GM23248 (cell line): ENCODE measurements at regions of chr10 and their contacts with region 1.

Region 1: DNA sequence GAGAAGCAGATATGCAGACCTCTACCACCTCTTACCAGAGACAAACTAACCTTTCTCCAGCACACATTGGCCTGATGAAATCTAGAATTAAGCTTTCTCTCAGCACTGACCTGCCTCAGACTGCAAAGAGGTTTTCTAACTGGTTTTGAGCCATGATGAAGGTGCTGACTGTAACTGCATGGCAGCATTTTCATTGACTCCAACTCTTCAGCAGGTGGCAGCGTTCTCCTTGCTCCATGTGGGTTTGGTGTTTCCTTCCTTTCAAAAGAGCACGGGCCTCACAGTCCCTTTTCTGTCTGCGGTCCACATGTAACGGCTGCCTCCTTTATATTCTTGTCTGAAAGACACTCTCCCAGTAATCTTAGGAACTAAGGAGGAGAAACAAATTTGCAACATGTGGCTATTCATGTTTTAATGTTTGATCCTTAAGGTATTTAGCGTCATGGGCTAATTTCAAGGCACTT is 12.6 kb downstream of the KLLN start:
- DNase-seq: peak; percentile 79
- H3K4me3 ChIP-seq: no peak overlapping the region
- H3K27ac ChIP-seq: no peak overlapping the region
- H3K4me1 ChIP-seq: peaks cover 6% of the 10 kb centered on the region
- H3K27me3 ChIP-seq: no peaks in the 10 kb centered on the region

Region 2: DNA sequence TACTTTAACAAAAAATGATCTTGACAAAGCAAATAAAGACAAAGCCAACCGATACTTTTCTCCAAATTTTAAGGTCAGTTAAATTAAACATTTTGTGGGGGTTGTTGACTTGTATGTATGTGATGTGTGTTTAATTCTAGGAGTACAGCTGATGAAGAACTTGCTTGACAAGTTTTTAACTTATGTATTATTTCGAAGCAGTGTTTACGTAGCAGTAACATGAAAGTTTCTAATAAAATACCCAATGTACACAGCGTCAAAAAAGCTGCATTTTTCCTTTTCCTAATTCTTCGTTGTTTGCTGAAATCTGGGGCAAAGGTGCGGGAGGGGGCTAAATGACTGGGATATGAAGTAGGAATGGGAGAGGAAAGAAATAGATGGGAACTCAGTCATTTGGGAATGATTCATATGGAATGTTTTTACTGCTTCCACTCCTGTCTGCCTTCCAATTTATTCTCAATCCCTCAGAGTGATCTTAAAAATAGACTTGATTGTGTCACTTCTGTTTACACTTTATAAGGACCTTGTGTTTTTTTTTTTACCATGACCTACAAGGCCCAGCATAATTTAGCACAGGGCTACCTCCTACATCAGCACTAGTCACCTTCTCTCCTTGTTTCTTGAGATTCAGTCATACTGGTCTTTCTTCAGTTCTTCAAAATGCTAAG is 110.4 kb after region 1 on chr10:
- in situ Hi-C with region 1: no loop called
- DNase-seq: peak; percentile 81
- H3K4me3 ChIP-seq: 0 out of 2 replicates have a peak overlapping the region, but pooled peaks have one; percentile 11
- H3K27ac ChIP-seq: peak overlapping the region; percentile 66
- H3K4me1 ChIP-seq: peaks cover 27% of the 10 kb centered on the region
- H3K27me3 ChIP-seq: no peaks in the 10 kb centered on the region

Region 3: DNA sequence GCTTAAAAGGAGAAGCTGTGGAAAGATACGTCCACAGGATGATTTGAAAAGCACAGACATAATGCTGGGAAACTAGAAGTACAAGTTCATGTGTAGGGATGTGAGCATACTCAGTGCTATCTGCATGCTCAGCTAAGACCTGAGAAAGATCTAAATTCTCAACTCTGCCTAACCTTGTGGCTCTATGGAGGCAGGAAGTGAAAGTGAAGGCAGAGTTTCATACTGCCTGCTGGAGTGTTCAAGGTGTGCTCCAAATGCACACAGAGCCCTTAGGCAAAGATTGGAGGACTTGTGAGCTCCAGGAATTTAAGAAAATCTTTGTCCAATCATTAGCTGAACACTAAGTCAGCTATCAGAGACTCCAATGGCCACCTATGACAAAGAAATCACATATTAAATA is 541.4 kb after region 1 on chr10:
- in situ Hi-C with region 1: loop called (anchors 10 kb)
- DNase-seq: no peak
- H3K4me3 ChIP-seq: no peak overlapping the region
- H3K27ac ChIP-seq: no peak overlapping the region
- H3K4me1 ChIP-seq: no peaks in the 10 kb centered on the region
- H3K27me3 ChIP-seq: no peaks in the 10 kb centered on the region

Region 4: DNA sequence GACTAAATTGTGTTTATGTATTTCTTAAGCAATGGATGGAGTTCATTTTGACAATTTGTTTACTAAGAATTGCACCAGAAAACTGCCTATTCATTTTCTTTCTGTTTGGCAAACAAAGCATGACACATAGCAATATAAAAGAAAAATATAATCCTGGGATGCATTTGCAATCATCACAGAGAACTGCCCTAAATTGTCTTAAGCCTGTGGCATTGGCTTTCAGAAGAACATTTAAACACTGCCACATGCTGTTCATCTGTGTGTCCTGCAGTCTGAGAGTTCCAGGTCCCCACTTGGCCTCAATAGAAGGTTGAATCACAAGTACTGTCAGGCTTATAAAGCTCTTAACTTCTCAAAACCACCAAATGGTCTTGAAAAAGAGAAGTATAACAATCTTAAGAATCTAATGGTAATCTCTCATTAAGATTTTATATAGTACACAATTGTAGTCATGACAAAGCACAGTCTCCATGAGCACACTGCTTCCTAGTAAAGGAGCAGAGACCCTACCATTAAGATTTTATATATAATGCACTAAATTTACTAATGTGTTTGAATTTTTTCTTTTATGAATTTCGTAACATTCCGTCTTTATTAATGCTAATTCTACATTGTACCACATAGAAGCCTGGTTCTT is 702.5 kb after region 1 on chr10:
- in situ Hi-C with region 1: loop called (anchors 10 kb)
- DNase-seq: peak; percentile 89
- H3K4me3 ChIP-seq: no peak overlapping the region
- H3K27ac ChIP-seq: no peak overlapping the region
- H3K4me1 ChIP-seq: peaks cover 13% of the 10 kb centered on the region
- H3K27me3 ChIP-seq: no peaks in the 10 kb centered on the region